Activated T-helper 2 cell treated with anti-CD3 and anti-CD28 coated beads, Interferon-gamma antibody, Interleukin-2, Interleukin-4, amounts not matched to agents 10 μg/mL and 5 μg/mL and 100 μg/mL, durations not matched to agents 14 hours and 24 hours and 36 hours (primary cell): ENCODE measurements at regions of chr6 and their contacts with region 1.

Region 1: DNA sequence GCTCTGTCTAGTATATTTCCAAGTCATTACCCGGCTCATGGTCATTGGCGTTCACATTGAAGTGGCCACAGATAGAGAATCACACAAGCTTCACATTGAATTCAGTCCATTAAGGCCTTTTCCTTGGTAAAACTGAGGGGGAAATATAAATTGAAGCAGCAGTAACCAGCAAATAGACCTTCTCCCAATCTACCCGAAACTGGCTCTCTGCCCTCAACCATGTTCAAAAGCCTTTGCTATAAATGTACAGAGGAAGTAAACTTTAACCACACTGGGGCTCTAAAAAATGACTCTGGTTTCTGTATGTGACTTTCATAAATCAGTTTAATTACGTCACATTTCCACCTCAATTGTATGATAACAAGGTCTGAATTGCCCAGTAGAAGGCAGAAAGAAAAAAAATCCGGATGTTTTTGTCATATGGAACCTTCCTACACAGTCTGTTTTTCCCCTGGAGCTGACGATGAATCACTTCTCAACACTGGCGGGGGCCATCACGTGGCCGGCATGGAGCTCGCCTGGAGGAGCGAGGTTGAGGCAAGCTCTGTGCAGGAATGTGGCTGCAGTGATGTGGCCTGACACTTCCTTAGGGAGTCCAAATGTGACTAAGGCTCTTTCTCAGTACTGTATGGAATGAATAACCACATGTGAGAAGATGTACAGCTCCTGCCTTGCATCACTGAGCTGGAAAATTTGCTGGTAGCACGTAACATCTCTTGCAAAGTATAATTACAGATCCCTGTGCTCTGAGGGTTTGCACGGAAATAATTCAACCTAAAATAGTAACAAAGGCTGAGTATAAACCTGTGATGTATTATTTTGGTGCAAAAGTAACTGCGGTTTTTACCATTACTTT is 58.6 kb upstream of the SNX9 start:
- DNase-seq: peak; percentile 79
- H3K4me3 Mint-ChIP-seq: peak overlapping the region; percentile 43
- H3K27ac Mint-ChIP-seq: peak overlapping the region; percentile 86
- H3K4me1 Mint-ChIP-seq: peaks cover 65% of the 10 kb centered on the region
- H3K27me3 Mint-ChIP-seq: peaks cover 15% of the 10 kb centered on the region

Region 2: GRCh38 chr6:157107915-157108651 is 656.3 kb before region 1 on chr6:
- intact Hi-C with region 1: loop called (anchors 1 kb)
- DNase-seq: no peak
- H3K4me3 Mint-ChIP-seq: peak overlapping the region; percentile 0
- H3K27ac Mint-ChIP-seq: peak overlapping the region; percentile 81
- H3K4me1 Mint-ChIP-seq: peaks cover 56% of the 10 kb centered on the region
- H3K27me3 Mint-ChIP-seq: no peaks in the 10 kb centered on the region

Region 3: GRCh38 chr6:157453978-157454377 is 310.4 kb before region 1 on chr6:
- intact Hi-C with region 1: no loop called
- DNase-seq: no peak
- H3K4me3 Mint-ChIP-seq: no peak overlapping the region
- H3K27ac Mint-ChIP-seq: no peak overlapping the region
- H3K4me1 Mint-ChIP-seq: peaks cover 23% of the 10 kb centered on the region
- H3K27me3 Mint-ChIP-seq: no peaks in the 10 kb centered on the region

Region 4: GRCh38 chr6:157741948-157742556 is 22.4 kb before region 1 on chr6:
- intact Hi-C with region 1: no loop called
- DNase-seq: no peak
- H3K4me3 Mint-ChIP-seq: no peak overlapping the region
- H3K27ac Mint-ChIP-seq: no peak overlapping the region
- H3K4me1 Mint-ChIP-seq: no peaks in the 10 kb centered on the region
- H3K27me3 Mint-ChIP-seq: peaks cover 30% of the 10 kb centered on the region

Region 5: DNA sequence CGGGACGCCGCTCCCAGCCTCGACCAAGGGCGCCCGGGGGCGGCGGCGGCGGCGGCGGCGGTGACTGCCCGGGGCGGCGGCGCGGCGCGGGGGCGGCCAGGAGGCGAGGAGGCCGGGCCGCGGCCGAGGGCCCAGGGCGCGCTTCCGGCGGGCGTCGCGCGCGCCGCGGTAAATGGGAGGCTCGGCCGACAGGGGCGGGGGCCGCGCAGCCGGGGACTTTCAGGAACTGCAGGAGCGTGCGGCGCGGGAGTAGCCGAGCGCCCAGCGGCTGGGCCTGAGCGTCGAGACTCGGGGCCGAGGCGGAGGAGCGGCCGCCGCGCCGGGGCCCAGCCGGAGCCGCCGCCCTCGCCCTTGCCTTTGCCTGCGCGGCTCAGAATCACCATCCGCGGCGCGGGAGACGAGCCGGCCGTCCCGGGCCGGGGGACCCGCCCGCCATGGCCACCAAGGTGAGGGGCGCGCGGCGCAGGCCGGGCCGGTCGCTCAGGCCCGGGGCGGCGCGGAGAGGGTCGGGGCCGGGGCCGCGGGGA is 58.7 kb after region 1 on chr6 and contains the start of gene SNX9:
- intact Hi-C with region 1: loop called (anchors 1 kb)
- DNase-seq: peak; percentile 42
- H3K4me3 Mint-ChIP-seq: peak within 1 kb of the TSS; percentile 92
- H3K27ac Mint-ChIP-seq: peak within 1 kb of the TSS; percentile 96
- H3K4me1 Mint-ChIP-seq: peaks cover 30% of the 10 kb centered on the region
- H3K27me3 Mint-ChIP-seq: peaks cover 35% of the 10 kb centered on the region
- total RNA-seq, gene SNX9: 55.3 and 55.6 TPM in 2 replicates

Region 6: DNA sequence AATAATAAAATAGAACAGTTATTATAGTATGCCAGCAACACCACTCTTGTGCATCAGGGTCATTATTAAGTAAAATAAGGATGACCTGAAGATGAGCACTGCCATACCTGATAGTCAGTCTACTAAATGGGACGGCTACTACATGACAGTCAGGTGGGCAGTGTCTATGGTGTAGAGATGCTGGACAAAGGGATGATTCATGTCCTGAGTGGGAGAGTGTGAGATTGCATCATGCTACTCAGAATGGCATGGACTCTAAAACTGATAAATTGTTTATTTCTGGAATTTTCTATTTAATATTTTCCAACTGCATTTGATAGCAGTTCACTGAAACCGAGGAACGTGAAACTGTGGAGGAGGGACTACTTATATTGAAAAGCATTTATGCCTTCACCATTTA is 97.4 kb after region 1 on chr6:
- intact Hi-C with region 1: loop called (anchors 1 kb)
- DNase-seq: no peak
- H3K4me3 Mint-ChIP-seq: no peak overlapping the region
- H3K27ac Mint-ChIP-seq: no peak overlapping the region
- H3K4me1 Mint-ChIP-seq: peaks cover 36% of the 10 kb centered on the region
- H3K27me3 Mint-ChIP-seq: peaks cover 47% of the 10 kb centered on the region

Region 7: GRCh38 chr6:157946865-157947532 is 182.6 kb after region 1 on chr6:
- intact Hi-C with region 1: loop called (anchors 2 kb)
- DNase-seq: no peak
- H3K4me3 Mint-ChIP-seq: no peak overlapping the region
- H3K27ac Mint-ChIP-seq: no peak overlapping the region
- H3K4me1 Mint-ChIP-seq: peaks cover 34% of the 10 kb centered on the region
- H3K27me3 Mint-ChIP-seq: peaks cover 17% of the 10 kb centered on the region

Region 8: DNA sequence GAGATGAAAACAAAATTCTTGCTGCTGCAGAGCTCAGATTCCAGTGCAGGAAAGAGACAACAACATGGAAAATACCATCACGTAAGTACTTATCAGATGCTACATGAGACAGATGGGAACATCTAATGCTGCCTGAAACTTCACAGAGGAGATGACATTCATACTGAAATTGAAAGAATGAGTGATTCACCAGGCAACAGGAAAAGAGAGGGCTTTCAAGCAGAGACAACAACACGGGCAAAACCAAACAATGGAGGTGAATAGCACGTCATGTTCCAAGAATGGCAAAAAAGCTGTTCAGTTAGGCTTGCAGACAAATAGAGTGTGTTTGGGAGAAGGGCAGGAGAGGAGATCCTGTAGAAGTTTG is 443.0 kb after region 1 on chr6:
- intact Hi-C with region 1: loop called (anchors 5 kb)
- DNase-seq: peak; percentile 54
- H3K4me3 Mint-ChIP-seq: peak overlapping the region; percentile 61
- H3K27ac Mint-ChIP-seq: peak overlapping the region; percentile 95
- H3K4me1 Mint-ChIP-seq: peaks cover 35% of the 10 kb centered on the region
- H3K27me3 Mint-ChIP-seq: no peaks in the 10 kb centered on the region